ENCODE measurements at regions of chr4 and their contacts with region 1.

Region 1: GRCh38 chr4:116688536-116688935 is 396.8 kb downstream of the TRAM1L1 start:
- DNase-seq: no peak
- H3K4me3 ChIP-seq: no peak overlapping the region
- CTCF ChIP-seq: no peak
- POLR2A ChIP-seq: no peak

Region 2: DNA sequence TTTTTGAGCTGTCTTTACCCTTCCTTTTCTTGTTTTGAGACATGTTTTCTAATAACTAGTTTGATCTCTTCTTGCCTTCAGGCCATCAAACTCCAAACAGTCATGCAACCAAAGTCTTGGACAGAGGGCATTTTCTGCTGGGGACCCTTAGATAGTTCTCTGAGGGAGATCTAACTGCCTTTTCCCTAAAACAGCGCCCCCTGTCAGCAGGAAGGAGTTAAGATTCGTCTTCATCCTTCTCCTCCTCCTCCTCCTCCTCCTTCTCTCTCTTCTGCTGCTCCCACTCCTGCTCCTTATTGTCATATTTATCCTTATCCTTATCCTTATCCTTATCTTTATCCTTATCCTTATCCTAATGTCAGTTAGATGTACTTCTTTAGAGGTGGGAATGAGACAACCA is 20.3 kb before region 1 on chr4:
- intact Hi-C with region 1: loop called (anchors 2 kb)
- DNase-seq: no peak
- H3K4me3 ChIP-seq: no peak overlapping the region
- CTCF ChIP-seq: no peak
- POLR2A ChIP-seq: no peak

Measured in lower leg skin (tissue), 4 donors.